ENCODE measurements at regions of chr19 and their contacts with region 1.

Region 1: DNA sequence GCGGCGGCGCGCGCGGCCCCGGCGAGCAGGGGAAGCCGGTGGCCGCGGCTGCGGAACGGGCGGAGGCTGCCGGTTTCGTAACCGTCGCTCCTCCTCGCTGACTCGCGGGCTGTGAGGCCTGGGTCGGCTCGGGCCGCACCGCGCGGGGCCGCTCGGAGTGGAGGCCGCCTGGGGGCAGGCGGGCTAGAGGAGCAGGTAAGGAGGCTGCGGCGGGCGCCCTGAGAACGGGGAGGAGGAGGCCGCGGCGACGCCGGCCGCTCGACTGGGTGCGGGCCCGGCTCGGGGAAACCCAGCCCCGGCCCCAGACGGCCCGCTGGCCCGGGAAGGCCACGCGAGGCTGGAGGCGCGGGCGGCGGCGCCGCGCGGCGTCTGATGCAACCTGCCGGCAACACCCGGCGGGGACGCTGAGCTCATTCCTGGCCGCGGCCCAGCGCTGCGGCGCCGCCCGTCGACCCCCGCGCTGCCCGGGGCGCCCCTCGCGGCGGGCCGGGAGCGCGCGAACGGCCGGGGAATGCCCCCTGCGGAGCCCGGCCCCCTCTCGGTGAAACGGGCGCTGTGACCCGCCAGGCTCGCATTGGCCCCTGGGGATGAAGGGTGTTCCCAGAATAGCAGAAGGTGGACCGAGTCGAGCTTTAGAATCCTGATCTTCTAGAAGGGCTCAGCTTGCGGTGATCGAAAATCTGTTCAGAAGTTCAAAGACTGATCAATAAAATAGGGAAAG is at the start of gene CEBPG:
- DNase-seq: peak in 1 of 2 experiments; percentile 93
- ATAC-seq: peak; percentile 29 to 75
- H3K4me3 ChIP-seq: peak within 1 kb of the TSS; percentile 65
- H3K27ac ChIP-seq: peak within 1 kb of the TSS; percentile 92 to 95
- H3K4me1 ChIP-seq: peaks cover 37% of the 10 kb centered on the region
- CTCF ChIP-seq: peak; percentile 43
- EP300 ChIP-seq: peak in 1 of 2 experiments; percentile 67; a peak in 2 of 5 replicates
- POLR2A ChIP-seq: peak; percentile 73
- RAD21 ChIP-seq: no peak
- polyA plus RNA-seq, gene CEBPG: 104 and 138 TPM in 2 replicates

Region 2: GRCh38 chr19:33248954-33249613 is 124.8 kb before region 1 on chr19:
- CTCF ChIA-PET with region 1: interaction called, 30 read pairs
- POLR2A ChIA-PET with region 1: interaction called, 14 read pairs
- DNase-seq: peak; percentile 63 to 90
- ATAC-seq: peak; percentile 72 to 79
- H3K4me3 ChIP-seq: 0 out of 3 replicates have a peak overlapping the region, but pooled peaks have one; percentile 18
- H3K27ac ChIP-seq: peak overlapping the region; percentile 36 to 75; a peak in 4 of 6 replicates
- H3K4me1 ChIP-seq: peaks cover 13% of the 10 kb centered on the region
- CTCF ChIP-seq: peak; percentile 48
- EP300 ChIP-seq: no peak
- POLR2A ChIP-seq: no peak
- RAD21 ChIP-seq: peak in 1 of 2 experiments; percentile 45; a peak in 3 of 5 replicates

Region 3: DNA sequence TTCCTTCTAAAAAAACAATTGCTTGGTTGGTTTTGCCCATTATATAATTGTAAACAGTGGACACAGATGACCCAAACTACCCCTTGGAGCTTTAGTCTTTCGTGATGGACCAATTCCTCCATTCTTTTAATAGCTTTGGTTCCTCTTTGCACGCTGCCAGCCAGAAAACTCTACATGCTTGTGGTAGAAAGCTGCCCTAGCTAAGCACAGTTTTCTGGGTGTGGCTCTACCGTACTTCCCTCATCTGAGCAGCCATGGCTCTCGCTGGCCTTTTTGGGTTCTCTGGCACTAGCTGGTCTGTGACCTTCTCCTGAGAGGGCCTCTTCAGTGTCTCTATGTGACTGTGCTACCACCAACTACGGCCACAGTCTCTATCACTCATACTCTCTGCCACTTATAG is 41.6 kb before region 1 on chr19:
- CTCF ChIA-PET with region 1: no interaction called
- POLR2A ChIA-PET with region 1: no interaction called
- DNase-seq: no peak
- ATAC-seq: no peak; a peak in 1 of 6 replicates
- H3K4me3 ChIP-seq: no peak overlapping the region
- H3K27ac ChIP-seq: no peak overlapping the region
- H3K4me1 ChIP-seq: peaks cover 3% of the 10 kb centered on the region; the same call in 1 of the 3 replicates
- CTCF ChIP-seq: no peak
- EP300 ChIP-seq: no peak
- POLR2A ChIP-seq: no peak
- RAD21 ChIP-seq: no peak

Region 4: GRCh38 chr19:33350538-33351309 is 23.1 kb before region 1 on chr19:
- CTCF ChIA-PET with region 1: interaction called, 7 read pairs
- POLR2A ChIA-PET with region 1: interaction called, 12 read pairs
- DNase-seq: peak in 1 of 2 experiments; percentile 40
- ATAC-seq: peak; percentile 22 to 32; a peak in 2 of 6 replicates
- H3K4me3 ChIP-seq: no peak overlapping the region
- H3K27ac ChIP-seq: no peak overlapping the region
- H3K4me1 ChIP-seq: no peaks in the 10 kb centered on the region
- CTCF ChIP-seq: no peak
- EP300 ChIP-seq: no peak
- POLR2A ChIP-seq: no peak
- RAD21 ChIP-seq: no peak

Region 5: GRCh38 chr19:33388725-33389420 is 15.0 kb after region 1 on chr19:
- CTCF ChIA-PET with region 1: interaction called, 881 read pairs
- POLR2A ChIA-PET with region 1: interaction called, 19 read pairs
- DNase-seq: no peak
- ATAC-seq: no peak
- H3K4me3 ChIP-seq: no peak overlapping the region
- H3K27ac ChIP-seq: no peak overlapping the region
- H3K4me1 ChIP-seq: peaks cover 20% of the 10 kb centered on the region; the same call in 2 of the 3 replicates
- CTCF ChIP-seq: no peak
- EP300 ChIP-seq: no peak
- POLR2A ChIP-seq: no peak
- RAD21 ChIP-seq: no peak

Measured in A549 (cell line).